ENCODE measurements at regions of chr13 and their contacts with region 1.

Region 1: GRCh38 chr13:98672944-98673545 is 79.4 kb downstream of the SLC15A1 start:
- DNase-seq: peak; percentile 33 to 74
- ATAC-seq: peak; percentile 72 to 82 (median 80)
- H3K4me3 ChIP-seq: no peak overlapping the region
- H3K4me3 Mint-ChIP-seq: no peak overlapping the region
- H3K27ac ChIP-seq: no peak overlapping the region
- H3K27ac Mint-ChIP-seq: no peak overlapping the region
- H3K4me1 ChIP-seq: peaks cover 15% of the 10 kb centered on the region
- H3K4me1 Mint-ChIP-seq: peaks cover 15% of the 10 kb centered on the region in 2 donors
- H3K27me3 ChIP-seq: no peaks in the 10 kb centered on the region
- H3K27me3 Mint-ChIP-seq: peaks cover 11 to 20% of the 10 kb centered on the region in 2 donors
- CTCF ChIP-seq: peak; percentile 70

Region 2: GRCh38 chr13:97855570-97856303 is 817.3 kb before region 1 on chr13:
- intact Hi-C with region 1: loop called (anchors 10 kb)
- DNase-seq: peak in 1 of 2 donors; percentile 46
- ATAC-seq: no peak
- H3K4me3 ChIP-seq: no peak overlapping the region
- H3K4me3 Mint-ChIP-seq: no peak overlapping the region
- H3K27ac ChIP-seq: no peak overlapping the region
- H3K27ac Mint-ChIP-seq: no peak overlapping the region
- H3K4me1 ChIP-seq: no peaks in the 10 kb centered on the region
- H3K4me1 Mint-ChIP-seq: no peaks in the 10 kb centered on the region
- H3K27me3 ChIP-seq: no peaks in the 10 kb centered on the region
- H3K27me3 Mint-ChIP-seq: peaks cover 0 to 3% of the 10 kb centered on the region in 2 donors
- CTCF ChIP-seq: peak; percentile 25

Region 3: DNA sequence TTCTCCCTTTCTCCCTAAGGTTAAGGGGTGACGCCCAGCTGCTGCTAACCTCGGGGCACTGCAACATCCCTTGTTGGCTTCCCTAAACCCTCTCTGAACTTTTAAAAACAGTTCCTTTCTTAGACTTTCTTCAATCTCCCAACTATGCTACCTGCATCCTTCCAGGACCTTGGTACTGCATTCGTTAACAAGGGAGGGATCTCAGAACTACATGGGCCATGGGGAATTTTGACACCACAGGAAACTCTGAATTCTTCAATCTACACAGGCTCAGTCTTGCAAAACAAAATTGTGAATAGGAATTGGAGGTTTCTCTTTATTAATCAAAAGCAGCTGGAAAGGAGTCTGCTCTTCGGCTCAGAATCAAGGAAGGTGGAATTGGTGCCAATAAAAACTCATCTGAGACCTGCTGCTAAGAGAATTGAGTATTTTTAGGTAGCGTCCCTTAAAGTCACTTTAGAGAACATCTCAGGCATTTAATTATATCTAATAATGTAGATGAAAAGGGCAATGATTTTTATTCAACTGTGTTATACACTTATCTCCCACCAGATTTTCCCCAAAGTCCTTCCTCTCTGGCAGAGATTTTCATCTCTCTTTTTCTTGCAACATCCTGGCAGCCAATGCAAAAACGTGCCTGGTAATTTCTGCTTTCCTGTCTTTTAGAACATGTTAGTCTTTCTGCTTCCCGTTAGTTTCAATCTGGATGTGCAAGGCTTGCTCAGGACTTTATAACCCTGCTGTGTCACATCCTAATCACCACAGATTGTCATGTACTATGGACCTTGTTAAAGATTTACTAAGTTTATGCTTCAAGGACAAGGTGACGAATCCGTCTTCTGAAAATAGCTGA is 148.6 kb after region 1 on chr13:
- intact Hi-C with region 1: no loop called
- DNase-seq: no peak
- ATAC-seq: no peak
- H3K4me3 ChIP-seq: no peak overlapping the region
- H3K4me3 Mint-ChIP-seq: no peak overlapping the region
- H3K27ac ChIP-seq: no peak overlapping the region
- H3K27ac Mint-ChIP-seq: no peak overlapping the region
- H3K4me1 ChIP-seq: no peaks in the 10 kb centered on the region
- H3K4me1 Mint-ChIP-seq: no peaks in the 10 kb centered on the region
- H3K27me3 ChIP-seq: no peaks in the 10 kb centered on the region
- H3K27me3 Mint-ChIP-seq: no peaks in the 10 kb centered on the region
- CTCF ChIP-seq: no peak